Activated CD4-positive, alpha-beta memory T cell treated with anti-CD3 and anti-CD28 coated beads for 36 hours (primary cell): ENCODE measurements at regions of chr7 and their contacts with region 1.

Region 1: DNA sequence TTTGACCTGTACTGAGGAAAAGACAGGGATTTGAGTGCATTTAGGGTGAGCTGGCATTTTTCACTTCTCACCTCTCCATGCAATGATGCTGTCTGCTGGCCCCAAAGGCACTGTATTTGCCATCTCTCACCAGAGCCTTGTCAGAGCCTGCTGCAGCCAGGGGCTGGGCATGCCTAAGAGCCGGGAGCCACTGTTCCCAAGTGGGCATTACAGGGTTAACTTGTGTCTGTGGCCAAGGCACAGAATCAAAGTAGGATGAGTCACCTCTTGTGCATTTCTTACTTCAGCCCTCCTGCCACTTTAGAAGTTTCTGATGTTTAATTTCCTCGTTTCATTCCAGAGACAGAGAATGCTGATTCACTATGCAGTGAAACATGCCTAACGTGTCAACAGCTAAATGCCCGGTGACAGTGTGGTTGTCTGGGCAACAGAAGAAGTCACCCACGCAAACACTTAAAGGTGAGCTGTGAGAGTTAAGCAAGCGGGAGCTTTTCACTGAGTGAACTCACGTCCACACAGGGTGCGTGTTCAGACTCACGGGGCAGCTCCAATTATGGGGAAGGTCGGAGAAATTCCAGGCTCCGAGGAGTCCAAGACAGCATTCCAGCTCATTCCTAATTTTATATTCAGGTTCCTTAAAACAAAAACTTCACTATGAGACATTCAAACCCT is 57.1 kb upstream of the IGFBP3 start:
- DNase-seq: peak; percentile 56
- H3K4me3 Mint-ChIP-seq: no peak overlapping the region
- H3K27ac Mint-ChIP-seq: no peak overlapping the region
- H3K4me1 Mint-ChIP-seq: peaks cover 10% of the 10 kb centered on the region
- H3K27me3 Mint-ChIP-seq: no peaks in the 10 kb centered on the region

Region 2: DNA sequence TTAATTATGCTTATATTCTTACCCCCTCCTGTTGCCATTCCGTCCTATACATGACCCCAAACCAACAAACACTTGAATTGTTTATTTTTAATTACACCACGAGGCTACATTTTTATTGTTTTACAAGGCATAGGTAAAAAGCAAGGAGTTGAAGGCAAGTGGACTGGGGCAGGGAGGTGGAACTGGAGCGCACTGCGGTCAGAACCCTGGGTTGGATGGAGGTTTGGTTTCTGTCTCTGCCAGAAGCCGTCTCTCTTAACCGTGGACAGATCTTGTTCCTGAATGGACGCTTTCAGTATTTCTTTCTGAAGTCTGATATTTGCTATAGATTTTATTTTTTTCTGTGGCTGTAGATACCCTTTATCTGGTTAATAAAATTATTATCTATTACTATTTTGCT is 37.2 kb before region 1 on chr7:
- CTCF ChIA-PET with region 1: no interaction called
- POLR2A ChIA-PET with region 1: interaction called, 3 read pairs
- intact Hi-C with region 1: loop called (anchors 2 kb)
- DNase-seq: no peak
- H3K4me3 Mint-ChIP-seq: peak overlapping the region; percentile 78
- H3K27ac Mint-ChIP-seq: peak overlapping the region; percentile 72
- H3K4me1 Mint-ChIP-seq: peaks cover 17% of the 10 kb centered on the region
- H3K27me3 Mint-ChIP-seq: peaks cover 2% of the 10 kb centered on the region

Region 3: GRCh38 chr7:46072683-46073082 is 94.5 kb after region 1 on chr7:
- CTCF ChIA-PET with region 1: no interaction called
- POLR2A ChIA-PET with region 1: no interaction called
- intact Hi-C with region 1: no loop called
- DNase-seq: no peak
- H3K4me3 Mint-ChIP-seq: no peak overlapping the region
- H3K27ac Mint-ChIP-seq: no peak overlapping the region
- H3K4me1 Mint-ChIP-seq: no peaks in the 10 kb centered on the region
- H3K27me3 Mint-ChIP-seq: no peaks in the 10 kb centered on the region

Region 4: GRCh38 chr7:46115410-46115809 is 137.3 kb after region 1 on chr7:
- CTCF ChIA-PET with region 1: no interaction called
- POLR2A ChIA-PET with region 1: no interaction called
- intact Hi-C with region 1: no loop called
- DNase-seq: no peak
- H3K4me3 Mint-ChIP-seq: no peak overlapping the region
- H3K27ac Mint-ChIP-seq: no peak overlapping the region
- H3K4me1 Mint-ChIP-seq: no peaks in the 10 kb centered on the region
- H3K27me3 Mint-ChIP-seq: no peaks in the 10 kb centered on the region